ENCODE measurements at regions of chr4 and their contacts with region 1.

Region 1: GRCh38 chr4:37603070-37603468 is 83.1 kb downstream of the RELL1 start:
- DNase-seq: peak; percentile 69 to 89 (median 84)
- H3K4me3 ChIP-seq: no peak overlapping the region
- H3K27ac ChIP-seq: no peak overlapping the region
- H3K27me3 ChIP-seq: no peaks in the 10 kb centered on the region
- CTCF ChIP-seq: peak; percentile 87 to 100 (median 98)

Region 2: DNA sequence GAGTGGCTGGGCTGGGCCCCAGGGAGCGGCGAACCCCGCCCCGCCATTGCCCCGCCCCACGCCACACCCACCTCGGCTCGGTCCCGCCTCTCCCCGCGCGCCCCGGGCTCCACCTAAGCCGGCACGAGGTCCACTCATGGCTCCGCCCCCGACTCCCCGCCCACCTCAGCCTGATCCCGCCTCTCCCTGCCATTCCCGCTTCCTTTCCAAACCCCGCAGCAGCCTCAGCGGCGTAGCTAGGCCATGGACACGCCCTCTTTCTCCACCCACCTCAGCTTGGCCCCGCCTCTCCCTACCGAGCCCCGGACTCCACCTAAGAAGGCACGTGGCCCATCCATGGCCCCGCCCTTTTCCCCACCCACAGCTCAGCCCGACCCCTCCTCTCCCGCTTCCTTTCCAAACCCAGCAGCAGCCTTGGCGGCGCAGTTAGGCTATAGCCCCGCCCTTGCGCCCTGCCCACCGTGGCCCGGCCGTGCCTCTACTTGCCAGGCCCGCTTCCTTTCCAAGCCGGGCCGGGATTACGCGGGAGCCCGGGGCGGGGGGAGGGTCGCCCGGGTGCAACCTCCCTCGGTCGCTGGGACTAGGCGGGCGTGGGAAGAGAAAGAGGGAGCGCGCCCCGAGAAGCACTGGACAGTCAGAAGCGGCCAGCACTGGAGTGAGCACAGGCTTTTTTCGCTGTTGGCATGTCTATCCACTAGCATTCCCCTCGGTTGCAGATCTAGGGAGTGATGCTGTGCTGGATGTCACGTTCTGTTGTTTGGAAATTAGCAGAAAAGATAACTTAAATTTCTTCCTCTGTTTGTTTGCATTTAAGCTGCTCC is 83.5 kb after region 1 on chr4 and contains the start of gene RELL1:
- intact Hi-C with region 1: loop called in 1 of 2 experiments (anchors 5 kb)
- DNase-seq: peak; percentile 98 to 100 (median 99)
- H3K4me3 ChIP-seq: peak within 1 kb of the TSS; percentile 66 to 98 (median 91)
- H3K27ac ChIP-seq: peak within 1 kb of the TSS; percentile 50 to 95 (median 89)
- H3K27me3 ChIP-seq: no peaks in the 10 kb centered on the region
- CTCF ChIP-seq: peak in 14 of 56 donors; percentile 5 to 49 (median 18)
- total RNA-seq, gene RELL1: 9.3 to 58.1 (median 21.9) TPM

Region 3: GRCh38 chr4:37780444-37781150 is 177.5 kb after region 1 on chr4:
- intact Hi-C with region 1: loop called in 1 of 2 experiments (anchors 5 kb)
- DNase-seq: no peak
- H3K4me3 ChIP-seq: no peak overlapping the region
- H3K27ac ChIP-seq: no peak overlapping the region
- H3K27me3 ChIP-seq: no peaks in the 10 kb centered on the region
- CTCF ChIP-seq: peak in 28 of 56 donors; percentile 11 to 52 (median 22)

Region 4: GRCh38 chr4:37802068-37802666 is 199.1 kb after region 1 on chr4:
- intact Hi-C with region 1: loop called in 1 of 2 experiments (anchors 1 kb)
- DNase-seq: peak in 7 of 10 donors; percentile 48 to 58 (median 49)
- H3K4me3 ChIP-seq: no peak overlapping the region
- H3K27ac ChIP-seq: no peak overlapping the region
- H3K27me3 ChIP-seq: peaks cover 0 to 4% (median 0%) of the 10 kb centered on the region in 45 donors
- CTCF ChIP-seq: peak; percentile 18 to 84 (median 60)

Region 5: DNA sequence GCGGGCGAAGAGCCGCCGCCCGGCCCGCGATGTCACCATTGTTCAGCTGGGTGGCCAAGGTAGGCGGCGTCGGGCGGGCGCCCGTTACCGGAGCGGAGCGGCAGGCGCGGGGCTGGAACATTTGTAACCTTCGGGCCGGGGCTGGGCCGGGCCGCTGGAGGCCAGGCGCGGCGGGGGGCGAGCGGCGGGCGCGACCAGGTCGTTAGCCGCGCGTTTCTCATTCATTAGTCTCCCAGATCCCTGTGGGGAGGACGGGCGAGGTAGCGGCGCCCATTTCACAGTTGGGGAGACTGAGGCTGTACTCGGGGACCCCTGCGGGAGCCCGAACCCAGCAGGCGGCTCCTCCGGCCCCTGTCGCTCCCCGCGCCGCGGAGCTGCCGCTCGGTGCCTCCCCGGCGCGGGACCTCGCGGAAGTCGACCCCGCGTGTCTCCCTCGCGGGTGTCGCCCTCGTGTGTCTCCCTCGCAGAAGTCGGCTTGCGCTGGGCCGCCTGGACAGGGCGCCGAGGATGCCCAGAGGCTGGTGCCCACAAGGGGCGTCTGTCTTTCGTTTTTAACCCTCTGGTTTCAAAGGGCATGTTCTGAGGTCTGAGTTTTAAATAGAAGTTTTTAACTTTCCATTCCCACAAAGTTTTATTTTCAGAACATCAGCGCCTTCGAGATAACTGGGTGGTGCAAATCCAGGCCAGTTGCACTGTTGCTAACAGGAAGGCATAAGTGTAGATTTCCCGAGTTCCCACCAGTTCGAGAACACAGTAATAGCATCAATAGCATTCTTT is 374.6 kb after region 1 on chr4:
- intact Hi-C with region 1: loop called in 1 of 2 experiments (anchors 10 kb)
- DNase-seq: peak; percentile 45 to 80 (median 66)
- H3K4me3 ChIP-seq: peak overlapping the region; percentile 56 to 89 (median 80)
- H3K27ac ChIP-seq: peak overlapping the region; percentile 5 to 95 (median 86)
- H3K27me3 ChIP-seq: no peaks in the 10 kb centered on the region
- CTCF ChIP-seq: peak in 54 of 56 donors; percentile 31 to 79 (median 64)

Region 6: DNA sequence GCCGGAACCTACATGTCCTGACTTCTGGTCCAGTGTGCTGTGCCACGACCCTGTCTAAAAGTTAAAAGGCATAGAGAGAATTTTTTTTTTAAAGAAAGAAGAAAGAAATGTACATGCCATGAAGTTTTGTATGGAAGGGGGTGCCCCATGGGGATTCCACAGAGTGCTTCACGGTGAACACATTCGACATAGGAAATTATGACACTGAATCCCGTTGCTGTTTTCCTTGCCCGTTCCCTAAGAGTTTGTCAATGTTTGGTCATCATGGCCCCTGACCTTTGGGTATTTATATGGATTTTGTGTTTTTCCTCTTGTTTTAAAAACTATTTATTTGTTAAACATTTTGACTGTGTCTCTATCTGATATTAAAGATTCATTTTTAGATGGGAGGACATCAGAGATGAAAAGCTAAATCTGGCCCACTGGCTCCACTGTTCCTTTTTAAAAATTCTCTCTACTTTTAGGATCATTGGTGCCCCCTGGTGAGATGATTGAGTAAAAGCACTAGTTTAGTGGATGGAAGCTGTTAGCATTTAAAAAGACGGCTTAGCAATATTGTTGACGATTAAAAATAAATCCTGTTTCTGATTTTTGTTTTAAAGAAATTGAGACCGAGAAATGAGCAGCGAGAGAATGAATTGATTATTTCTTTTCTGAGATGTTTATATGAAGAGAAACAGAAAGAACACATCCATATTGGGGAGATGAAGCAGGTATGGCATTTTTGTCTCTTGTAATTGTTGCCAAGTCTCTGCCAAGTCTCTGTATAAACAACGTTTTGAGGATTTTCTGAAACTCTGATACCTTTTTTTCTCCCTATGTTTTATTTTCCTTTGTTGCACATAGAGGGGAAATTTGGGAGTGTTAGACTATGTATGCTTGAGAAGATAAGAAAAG is 432.2 kb after region 1 on chr4:
- intact Hi-C with region 1: loop called in 1 of 2 experiments (anchors 10 kb)
- DNase-seq: peak in 2 of 10 donors; percentile 11 to 21
- H3K4me3 ChIP-seq: no peak overlapping the region
- H3K27ac ChIP-seq: no peak overlapping the region
- H3K27me3 ChIP-seq: no peaks in the 10 kb centered on the region
- CTCF ChIP-seq: peak; percentile 48 to 84 (median 71)